Activated naive CD4-positive, alpha-beta T cell treated with anti-CD3 and anti-CD28 coated beads, Interleukin-2, amount 10 ng/mL, durations not matched to agents 7 days and 5 days (primary cell): ENCODE measurements at regions of chr6 and their contacts with region 1.

Region 1: GRCh38 chr6:35452186-35453090 is at the start of gene FANCE:
- DNase-seq: peak; percentile 95
- H3K4me3 Mint-ChIP-seq: peak within 1 kb of the TSS; percentile 80
- H3K27ac Mint-ChIP-seq: peak within 1 kb of the TSS; percentile 80
- H3K4me1 Mint-ChIP-seq: peaks cover 57% of the 10 kb centered on the region
- H3K27me3 Mint-ChIP-seq: peaks cover 30% of the 10 kb centered on the region

Region 2: DNA sequence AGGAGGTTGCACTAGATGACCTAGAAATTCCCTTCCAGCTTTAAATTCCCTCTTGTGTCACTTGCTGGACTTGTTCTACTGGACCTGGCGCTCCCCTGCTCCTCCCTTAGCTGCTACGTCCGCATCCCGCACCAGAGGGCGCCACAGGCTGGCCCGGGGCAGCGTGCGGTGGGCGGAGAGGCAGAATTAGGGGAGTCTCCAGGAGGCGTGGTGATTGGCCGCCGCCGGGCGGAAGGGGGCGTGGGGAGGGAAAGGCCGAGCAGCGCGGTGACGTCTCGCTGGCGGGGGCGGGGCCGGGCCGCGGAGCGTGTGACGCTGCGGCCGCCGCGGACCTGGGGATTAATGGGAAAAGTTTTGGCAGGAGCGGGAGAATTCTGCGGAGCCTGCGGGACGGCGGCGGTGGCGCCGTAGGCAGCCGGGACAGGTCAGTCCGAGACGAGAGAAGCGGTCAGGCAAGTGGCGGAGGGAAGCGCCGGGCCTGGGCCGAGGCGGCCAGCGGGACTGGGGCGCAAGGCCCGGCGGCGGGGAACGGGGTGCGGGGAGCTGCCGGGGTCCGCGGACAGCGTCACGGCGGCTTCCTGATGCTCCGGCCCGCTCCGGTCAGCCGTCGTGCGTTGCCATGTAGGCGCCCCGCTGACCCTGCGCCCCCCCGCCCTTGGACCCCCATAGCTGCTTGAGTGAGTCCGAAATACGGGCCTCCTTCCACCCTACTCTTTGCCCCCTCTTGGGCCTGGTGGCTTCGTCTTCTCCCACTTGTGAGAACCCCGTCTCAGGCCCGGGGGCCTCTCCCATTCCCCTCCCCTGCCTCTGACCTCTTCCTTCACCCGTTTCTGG is 110.0 kb before region 1 on chr6 and contains the start of gene PPARD:
- CTCF ChIA-PET with region 1: interaction called, 114 read pairs
- DNase-seq: peak; percentile 98
- H3K4me3 Mint-ChIP-seq: peak within 1 kb of the TSS; percentile 95
- H3K27ac Mint-ChIP-seq: peak within 1 kb of the TSS; percentile 86
- H3K4me1 Mint-ChIP-seq: peaks cover 53% of the 10 kb centered on the region
- H3K27me3 Mint-ChIP-seq: peaks cover 7% of the 10 kb centered on the region

Region 3: DNA sequence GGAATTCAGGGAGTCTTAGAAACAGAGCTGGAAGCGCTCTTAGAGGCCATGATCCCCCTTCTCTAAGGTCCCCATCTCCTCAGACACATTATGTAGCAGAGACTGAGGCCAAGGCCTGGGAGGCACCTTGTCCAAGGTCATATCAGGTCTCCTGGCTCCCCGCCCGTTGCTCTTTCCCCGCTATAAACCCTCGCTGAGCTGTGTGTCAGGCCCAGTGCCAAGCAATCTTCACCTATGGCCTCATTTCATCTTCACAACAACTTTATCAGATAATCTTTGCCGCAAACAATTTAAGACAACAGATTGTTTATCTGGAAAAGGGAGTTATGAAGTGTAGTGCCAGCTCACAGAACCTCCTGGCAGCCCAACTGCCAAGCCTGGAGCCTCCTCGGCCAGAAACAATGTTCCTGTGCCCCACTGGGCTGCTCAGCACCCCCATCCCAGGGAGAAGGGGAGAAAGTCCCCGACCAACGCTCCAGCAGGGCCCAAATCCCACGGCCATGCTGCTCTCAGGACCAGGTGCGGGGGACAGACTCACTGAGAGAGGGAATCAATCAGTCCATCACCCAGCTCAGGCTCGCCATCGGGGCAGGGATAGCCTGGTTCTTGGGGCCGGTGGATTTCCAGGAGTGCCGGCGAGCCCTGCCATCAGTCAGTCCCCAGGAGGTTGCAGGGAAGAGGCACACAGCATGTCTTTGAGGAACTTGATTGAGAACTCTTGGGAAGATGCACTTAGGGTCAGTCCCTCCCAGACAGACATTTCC is 17.2 kb before region 1 on chr6:
- CTCF ChIA-PET with region 1: interaction called, 12 read pairs
- DNase-seq: no peak
- H3K4me3 Mint-ChIP-seq: no peak overlapping the region
- H3K27ac Mint-ChIP-seq: no peak overlapping the region
- H3K4me1 Mint-ChIP-seq: no peaks in the 10 kb centered on the region
- H3K27me3 Mint-ChIP-seq: peaks cover 17% of the 10 kb centered on the region

Region 4: GRCh38 chr6:35468181-35468979 is 15.9 kb after region 1 on chr6 and contains the start of gene RPL10A:
- CTCF ChIA-PET with region 1: interaction called, 27 read pairs
- DNase-seq: peak; percentile 97
- H3K4me3 Mint-ChIP-seq: peak within 1 kb of the TSS; percentile 99
- H3K27ac Mint-ChIP-seq: peak within 1 kb of the TSS; percentile 99
- H3K4me1 Mint-ChIP-seq: peaks cover 41% of the 10 kb centered on the region
- H3K27me3 Mint-ChIP-seq: no peaks in the 10 kb centered on the region

Region 5: GRCh38 chr6:35569011-35569461 is 116.6 kb after region 1 on chr6:
- CTCF ChIA-PET with region 1: no interaction called
- DNase-seq: peak; percentile 60
- H3K4me3 Mint-ChIP-seq: no peak overlapping the region
- H3K27ac Mint-ChIP-seq: no peak overlapping the region
- H3K4me1 Mint-ChIP-seq: no peaks in the 10 kb centered on the region
- H3K27me3 Mint-ChIP-seq: peaks cover 23% of the 10 kb centered on the region

Region 6: DNA sequence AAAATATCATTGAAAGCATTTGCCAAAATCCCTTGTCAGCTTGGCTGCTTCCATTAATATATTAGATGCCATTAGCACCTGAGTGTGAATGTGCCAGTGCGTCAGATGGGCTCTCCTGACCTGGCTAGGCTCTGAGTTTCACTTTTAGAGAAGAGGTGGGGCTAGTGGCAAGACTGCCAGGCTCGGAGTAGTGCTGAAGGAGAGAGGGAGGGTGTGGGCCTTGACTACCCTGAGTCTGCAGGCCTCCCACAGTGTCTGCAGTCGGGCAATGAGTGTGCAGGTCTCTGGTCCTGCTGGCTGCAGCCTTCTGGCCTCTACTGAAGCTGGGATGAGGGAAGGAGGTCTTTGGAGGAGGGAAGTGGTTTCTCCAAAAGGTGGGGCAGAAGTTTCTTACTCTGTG is 782.9 kb after region 1 on chr6:
- CTCF ChIA-PET with region 1: no interaction called
- DNase-seq: peak; percentile 23
- H3K4me3 Mint-ChIP-seq: no peak overlapping the region
- H3K27ac Mint-ChIP-seq: no peak overlapping the region
- H3K4me1 Mint-ChIP-seq: peaks cover 9% of the 10 kb centered on the region
- H3K27me3 Mint-ChIP-seq: no peaks in the 10 kb centered on the region